ENCODE measurements at regions of chr10 and their contacts with region 1.

Region 1: GRCh38 chr10:43892062-43892770 is 243.5 kb upstream of the ZNF32 start:
- DNase-seq: peak; percentile 50
- ATAC-seq: peak; percentile 69
- H3K4me3 ChIP-seq: no peak overlapping the region
- H3K27ac ChIP-seq: peak overlapping the region; percentile 31
- H3K4me1 ChIP-seq: peaks cover 16% of the 10 kb centered on the region
- H3K27me3 ChIP-seq: no peaks in the 10 kb centered on the region
- CTCF ChIP-seq: no peak
- POLR2A ChIP-seq: no peak
- RAD21 ChIP-seq: no peak

Region 2: GRCh38 chr10:43843321-43844101 is 48.7 kb before region 1 on chr10:
- CTCF ChIA-PET with region 1: no interaction called
- POLR2A ChIA-PET with region 1: no interaction called
- dilution Hi-C with region 1: no loop called
- in situ Hi-C with region 1: no loop called
- intact Hi-C with region 1: loop called (anchors 5 kb)
- DNase-seq: peak; percentile 86
- ATAC-seq: peak; percentile 85
- H3K4me3 ChIP-seq: no peak overlapping the region
- H3K27ac ChIP-seq: peak overlapping the region; percentile 68
- H3K4me1 ChIP-seq: peaks cover 25% of the 10 kb centered on the region
- H3K27me3 ChIP-seq: no peaks in the 10 kb centered on the region; the same call in 1 of the 2 replicates
- CTCF ChIP-seq: no peak
- POLR2A ChIP-seq: no peak
- RAD21 ChIP-seq: peak; percentile 28; the same call in 1 of the 2 replicates

Region 3: GRCh38 chr10:44660271-44660670 is 768.1 kb after region 1 on chr10:
- CTCF ChIA-PET with region 1: no interaction called
- POLR2A ChIA-PET with region 1: no interaction called
- dilution Hi-C with region 1: no loop called
- in situ Hi-C with region 1: no loop called
- intact Hi-C with region 1: no loop called
- DNase-seq: peak; percentile 44
- ATAC-seq: peak; percentile 53
- H3K4me3 ChIP-seq: no peak overlapping the region
- H3K27ac ChIP-seq: no peak overlapping the region
- H3K4me1 ChIP-seq: peaks cover 5% of the 10 kb centered on the region
- H3K27me3 ChIP-seq: peaks cover 3% of the 10 kb centered on the region
- CTCF ChIP-seq: no peak
- POLR2A ChIP-seq: no peak
- RAD21 ChIP-seq: no peak